A673 (cell line): ENCODE measurements at regions of chr10 and their contacts with region 1.

Region 1: GRCh38 chr10:100373298-100374136 is 26.5 kb downstream of the SCD start:
- DNase-seq: peak; percentile 99
- H3K4me3 ChIP-seq: peak overlapping the region; percentile 75
- H3K27ac ChIP-seq: peak overlapping the region; percentile 100
- H3K4me1 ChIP-seq: peaks cover 30% of the 10 kb centered on the region
- H3K27me3 ChIP-seq: no peaks in the 10 kb centered on the region
- CTCF ChIP-seq: no peak

Region 2: GRCh38 chr10:100403734-100404133 is 30.2 kb after region 1 on chr10:
- CTCF ChIA-PET with region 1: no interaction called
- POLR2A ChIA-PET with region 1: no interaction called
- intact Hi-C with region 1: no loop called
- DNase-seq: peak; percentile 6
- H3K4me3 ChIP-seq: no peak overlapping the region
- H3K27ac ChIP-seq: no peak overlapping the region
- H3K4me1 ChIP-seq: no peaks in the 10 kb centered on the region
- H3K27me3 ChIP-seq: no peaks in the 10 kb centered on the region
- CTCF ChIP-seq: no peak

Region 3: DNA sequence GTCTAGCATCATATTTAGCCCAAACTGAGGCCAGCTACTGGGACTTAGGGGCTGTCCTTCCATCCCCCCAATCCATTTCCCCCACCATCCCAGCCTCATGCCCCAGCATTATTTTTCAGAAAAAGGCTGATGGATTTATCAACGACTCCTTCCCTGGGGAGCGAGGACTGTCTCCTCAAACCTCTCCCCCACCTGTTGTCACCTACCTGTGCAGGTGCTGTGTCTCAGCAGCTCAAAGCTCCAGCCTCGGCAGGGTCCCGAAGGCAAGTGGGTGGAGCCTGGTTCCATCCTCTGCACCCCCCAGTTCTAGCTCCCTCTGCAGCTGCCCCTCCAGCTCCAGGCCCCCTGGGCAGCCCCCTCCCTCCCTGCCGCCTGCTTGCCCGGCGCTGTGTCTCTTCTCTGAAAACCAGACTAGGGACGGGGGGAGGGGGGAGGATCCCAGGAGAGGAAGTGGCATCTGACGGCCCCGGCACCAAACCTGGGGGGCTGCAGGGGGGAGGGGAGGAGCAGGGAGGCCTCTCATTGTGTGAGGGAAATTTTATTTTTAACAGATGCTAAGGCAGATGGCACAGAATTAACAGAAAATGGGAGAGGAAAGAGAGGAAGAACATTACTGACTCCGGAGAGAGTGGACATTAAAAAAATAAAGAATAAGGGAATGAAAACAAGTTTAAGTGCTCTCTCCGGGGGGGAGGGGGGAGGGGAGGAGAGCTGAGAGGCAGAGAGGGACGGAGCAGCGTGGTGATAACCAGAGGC is 310.2 kb after region 1 on chr10:
- CTCF ChIA-PET with region 1: no interaction called
- POLR2A ChIA-PET with region 1: interaction called, 11 read pairs
- intact Hi-C with region 1: no loop called
- DNase-seq: peak; percentile 42
- H3K4me3 ChIP-seq: no peak overlapping the region
- H3K27ac ChIP-seq: no peak overlapping the region
- H3K4me1 ChIP-seq: peaks cover 39% of the 10 kb centered on the region
- H3K27me3 ChIP-seq: peaks cover 61% of the 10 kb centered on the region
- CTCF ChIP-seq: no peak

Region 4: DNA sequence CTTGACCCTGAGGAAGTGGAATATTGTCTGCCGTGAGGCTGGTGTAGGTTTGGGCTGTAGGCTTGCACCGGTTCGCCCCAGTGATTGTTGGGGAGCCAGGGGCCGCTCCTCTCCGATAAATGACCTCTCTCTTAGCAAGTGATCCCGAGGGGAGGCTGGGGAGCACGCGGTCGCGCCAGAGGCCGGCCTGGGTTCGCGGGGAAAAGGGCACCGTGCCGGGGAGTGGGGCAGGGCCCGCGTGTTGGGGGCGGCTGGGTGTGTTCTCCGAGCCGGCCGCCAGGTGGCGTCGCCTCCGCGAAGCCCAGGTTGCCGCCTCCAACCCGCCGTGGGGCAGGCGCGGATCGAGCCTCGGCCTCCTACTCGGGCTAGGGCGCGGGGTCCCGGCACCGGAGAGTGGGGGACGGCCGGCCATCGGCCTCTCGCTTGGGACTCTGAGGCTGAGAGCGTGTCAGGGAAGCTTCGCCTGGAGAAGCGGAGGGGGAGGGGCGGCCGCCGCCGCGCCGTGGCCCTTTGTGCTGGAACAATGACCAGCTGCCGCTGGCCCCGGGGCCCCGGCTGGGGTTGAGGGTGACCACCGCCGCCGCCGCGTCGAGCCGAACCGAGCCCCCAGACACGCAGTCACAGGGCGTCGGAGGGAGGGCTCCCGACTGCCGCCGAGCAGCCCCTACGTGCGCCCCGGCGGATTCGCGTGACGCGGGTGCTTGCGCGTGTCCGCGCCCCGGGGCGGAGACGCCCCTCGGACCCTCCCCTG is 625.6 kb after region 1 on chr10:
- CTCF ChIA-PET with region 1: no interaction called
- POLR2A ChIA-PET with region 1: no interaction called
- intact Hi-C with region 1: no loop called
- DNase-seq: peak; percentile 84
- H3K4me3 ChIP-seq: peak overlapping the region; percentile 88
- H3K27ac ChIP-seq: peak overlapping the region; percentile 98
- H3K4me1 ChIP-seq: peaks cover 44% of the 10 kb centered on the region
- H3K27me3 ChIP-seq: no peaks in the 10 kb centered on the region
- CTCF ChIP-seq: peak; percentile 83